RWPE1 (cell line): ENCODE measurements at regions of chr5 and their contacts with region 1.

Region 1: DNA sequence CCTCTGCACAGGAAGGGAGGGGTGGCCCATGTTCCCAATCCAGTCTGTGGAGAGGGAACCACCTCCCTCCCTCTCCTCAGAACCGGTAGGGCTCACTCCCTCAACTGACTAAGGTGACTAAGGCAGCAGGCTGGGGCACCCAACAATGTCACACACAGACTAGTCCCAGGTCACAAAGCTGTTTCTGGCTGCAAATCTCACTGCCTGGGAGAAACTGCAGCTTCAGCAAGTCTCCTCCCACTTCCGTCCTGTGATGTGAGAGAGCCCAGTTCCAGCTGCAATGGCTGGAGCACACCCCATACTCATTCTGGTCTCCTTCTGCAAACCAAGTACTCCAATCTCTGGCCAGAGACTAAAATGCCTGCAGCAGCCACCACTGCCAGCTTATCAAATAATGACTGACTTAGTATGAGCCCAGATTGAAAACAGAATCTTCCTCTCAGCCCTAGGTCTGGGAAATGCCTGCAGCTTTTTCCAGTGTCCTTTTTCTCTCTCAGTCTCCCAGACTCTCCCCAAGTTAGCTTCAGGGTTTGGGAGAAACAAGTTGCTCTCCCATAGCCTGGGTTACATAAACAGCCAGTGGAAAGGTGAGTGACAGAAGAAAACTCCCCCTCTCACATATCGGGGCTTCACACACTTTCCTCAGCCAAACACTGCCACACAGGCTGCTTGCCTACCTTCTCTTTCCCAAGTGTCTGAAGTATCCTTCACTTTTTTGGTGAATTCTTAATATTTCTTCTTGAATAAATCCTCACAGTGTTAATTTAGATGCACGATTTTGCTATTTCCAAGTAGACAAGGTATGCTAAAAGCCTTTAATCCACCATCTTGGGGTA is 247.4 kb upstream of the RASA1 start:
- DNase-seq: no peak
- H3K27ac ChIP-seq: peak overlapping the region; percentile 4; the same call in 1 of the 2 replicates
- CTCF ChIP-seq: no peak

Region 2: DNA sequence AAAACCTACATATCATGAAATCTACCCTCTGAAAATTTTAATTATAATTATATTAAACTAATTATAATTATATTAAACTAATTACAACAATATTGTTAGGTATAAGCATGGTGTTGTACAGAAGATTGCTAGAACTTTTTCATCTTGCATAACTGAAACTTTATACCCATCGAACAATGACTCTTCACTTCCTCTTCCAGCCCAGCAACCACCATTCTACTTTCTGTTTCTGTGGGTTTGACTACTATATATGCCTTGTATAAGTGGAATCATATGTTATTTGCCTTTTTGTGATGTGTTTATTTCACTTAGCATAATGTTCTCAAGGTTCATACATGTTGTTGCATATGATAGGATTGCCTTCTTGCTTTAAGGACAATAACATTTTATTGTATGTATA is 666.7 kb after region 1 on chr5:
- CTCF ChIA-PET with region 1: no interaction called
- POLR2A ChIA-PET with region 1: no interaction called
- DNase-seq: no peak
- H3K27ac ChIP-seq: no peak overlapping the region
- CTCF ChIP-seq: no peak

Region 3: GRCh38 chr5:88452820-88453219 is 1432.5 kb after region 1 on chr5:
- CTCF ChIA-PET with region 1: interaction called, 10 read pairs
- POLR2A ChIA-PET with region 1: no interaction called
- DNase-seq: no peak
- H3K27ac ChIP-seq: no peak overlapping the region
- CTCF ChIP-seq: no peak